Naive thymus-derived CD4-positive, alpha-beta T cell (primary cell): ENCODE measurements at regions of chr10 and their contacts with region 1.

Region 1: GRCh38 chr10:13787015-13787421 is 200.3 kb downstream of the PRPF18 start:
- DNase-seq: peak; percentile 37 to 94 (median 91)
- ATAC-seq: peak; percentile 94
- H3K4me3 ChIP-seq: peak overlapping the region; percentile 17
- H3K4me3 Mint-ChIP-seq: peak overlapping the region in 9 of 10 donors; percentile 76 to 88 (median 84)
- H3K27ac ChIP-seq: peak overlapping the region; percentile 93
- H3K27ac Mint-ChIP-seq: no peak overlapping the region
- H3K4me1 ChIP-seq: peaks cover 29 to 50% of the 10 kb centered on the region in 2 donors
- H3K4me1 Mint-ChIP-seq: peaks cover 11 to 37% (median 20%) of the 10 kb centered on the region in 7 donors
- H3K27me3 ChIP-seq: no peaks in the 10 kb centered on the region
- H3K27me3 Mint-ChIP-seq: no peaks in the 10 kb centered on the region

Region 2: DNA sequence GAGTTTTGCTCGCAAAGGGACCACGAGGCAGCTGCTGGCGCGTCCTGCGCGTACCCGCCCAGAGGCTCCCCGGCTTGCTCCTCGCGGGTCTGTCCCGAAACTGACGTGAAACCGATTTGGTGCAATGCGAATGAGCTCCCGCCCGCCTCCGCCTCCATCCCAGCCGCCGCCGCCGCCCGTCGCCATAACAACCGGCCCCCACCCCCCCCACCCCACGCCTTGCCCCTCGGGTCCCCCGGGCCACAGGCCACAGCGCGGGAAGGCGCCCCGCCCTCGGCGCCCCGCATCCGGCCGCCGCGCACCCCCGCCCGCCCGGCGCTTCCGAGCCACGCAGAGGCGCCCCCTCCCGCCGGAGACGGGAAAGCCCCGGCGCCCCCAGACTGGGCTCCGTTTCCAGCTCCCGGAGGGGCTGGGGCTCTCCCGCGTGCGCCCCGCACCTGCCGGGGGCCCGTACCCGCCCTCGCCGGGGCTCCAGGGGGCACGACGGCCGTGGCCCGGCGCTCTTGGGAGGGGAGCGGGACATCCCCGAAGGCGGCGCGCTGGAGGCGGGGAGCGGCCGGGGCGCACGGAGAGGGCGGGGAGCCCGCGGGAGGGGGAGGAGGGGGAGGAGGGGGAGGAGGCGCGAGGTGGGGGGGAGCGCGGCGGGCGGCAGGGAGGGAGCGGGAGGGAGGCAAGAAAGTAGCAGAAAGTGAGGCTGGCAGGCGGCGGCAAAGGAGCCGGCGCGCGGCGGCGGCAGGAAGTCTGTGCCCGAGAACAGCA is 1438.0 kb before region 1 on chr10 and contains the start of gene CAMK1D:
- CTCF ChIA-PET with region 1: no interaction called
- POLR2A ChIA-PET with region 1: no interaction called
- intact Hi-C with region 1: loop called (anchors 5 kb)
- DNase-seq: peak; percentile 83 to 92 (median 90)
- ATAC-seq: peak; percentile 84
- H3K4me3 ChIP-seq: peak within 1 kb of the TSS; percentile 83
- H3K4me3 Mint-ChIP-seq: peak within 1 kb of the TSS; percentile 78 to 99 (median 97)
- H3K27ac ChIP-seq: peak within 1 kb of the TSS; percentile 89
- H3K27ac Mint-ChIP-seq: peak within 1 kb of the TSS; percentile 86 to 99 (median 97)
- H3K4me1 ChIP-seq: peaks cover 18 to 19% of the 10 kb centered on the region in 2 donors
- H3K4me1 Mint-ChIP-seq: peaks cover 23 to 51% (median 42%) of the 10 kb centered on the region in 7 donors
- H3K27me3 ChIP-seq: no peaks in the 10 kb centered on the region
- H3K27me3 Mint-ChIP-seq: peaks cover 0 to 64% (median 0%) of the 10 kb centered on the region in 5 donors
- total RNA-seq, gene CAMK1D: 12.5 to 43.2 (median 18.7) TPM

Region 3: DNA sequence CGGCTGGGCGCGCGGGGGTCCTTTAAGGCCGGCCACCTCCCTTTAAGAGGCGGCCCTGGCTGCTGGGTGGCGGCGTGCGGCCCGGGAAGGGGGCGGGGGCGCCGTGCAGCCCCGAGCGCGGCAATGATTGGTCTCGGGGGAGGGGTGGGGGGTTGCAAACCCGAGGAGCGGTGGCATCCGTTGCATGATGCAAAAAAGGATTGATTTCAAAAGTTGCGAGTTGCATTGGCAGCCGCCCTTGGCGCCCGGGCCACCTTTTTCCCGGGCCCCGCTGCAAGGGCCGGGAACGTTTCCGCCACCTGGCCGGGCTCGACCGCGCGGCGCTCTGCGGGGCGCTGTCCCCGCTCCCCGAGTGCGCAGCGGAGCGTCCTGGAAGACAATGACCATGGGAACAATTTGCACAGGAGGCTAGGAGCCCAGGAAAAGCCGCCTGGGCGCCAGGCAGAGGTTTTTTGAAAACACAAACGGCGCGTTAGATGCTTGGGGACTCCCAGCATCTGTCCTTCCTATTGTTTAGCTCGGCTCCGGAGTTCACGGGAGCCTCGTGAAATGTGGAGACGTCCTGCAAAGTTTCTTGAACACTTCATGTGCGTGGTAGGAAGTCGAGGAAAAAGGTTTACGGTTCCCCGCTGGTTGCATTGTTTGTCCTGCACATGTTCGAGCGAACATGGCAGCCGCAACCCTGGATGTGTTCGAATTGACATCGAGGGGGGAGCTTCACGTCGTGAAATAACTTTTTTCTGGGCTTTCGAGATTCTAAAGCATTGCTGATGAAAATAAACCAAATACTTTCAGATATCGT is 438.6 kb before region 1 on chr10 and contains the start of gene SEPHS1:
- CTCF ChIA-PET with region 1: no interaction called
- POLR2A ChIA-PET with region 1: no interaction called
- intact Hi-C with region 1: loop called in 1 of 2 experiments (anchors 1 kb)
- DNase-seq: peak; percentile 62 to 87 (median 84)
- ATAC-seq: peak; percentile 83
- H3K4me3 ChIP-seq: peak within 1 kb of the TSS; percentile 95
- H3K4me3 Mint-ChIP-seq: peak within 1 kb of the TSS; percentile 92 to 99 (median 96)
- H3K27ac ChIP-seq: peak within 1 kb of the TSS; percentile 84
- H3K27ac Mint-ChIP-seq: peak within 1 kb of the TSS; percentile 90 to 98 (median 97)
- H3K4me1 ChIP-seq: peaks cover 18 to 36% of the 10 kb centered on the region in 2 donors
- H3K4me1 Mint-ChIP-seq: peaks cover 28 to 69% (median 62%) of the 10 kb centered on the region in 7 donors
- H3K27me3 ChIP-seq: no peaks in the 10 kb centered on the region
- H3K27me3 Mint-ChIP-seq: peaks cover 0 to 9% (median 0%) of the 10 kb centered on the region in 5 donors
- total RNA-seq, gene SEPHS1: 23.7 to 57.3 (median 36.5) TPM

Region 4: DNA sequence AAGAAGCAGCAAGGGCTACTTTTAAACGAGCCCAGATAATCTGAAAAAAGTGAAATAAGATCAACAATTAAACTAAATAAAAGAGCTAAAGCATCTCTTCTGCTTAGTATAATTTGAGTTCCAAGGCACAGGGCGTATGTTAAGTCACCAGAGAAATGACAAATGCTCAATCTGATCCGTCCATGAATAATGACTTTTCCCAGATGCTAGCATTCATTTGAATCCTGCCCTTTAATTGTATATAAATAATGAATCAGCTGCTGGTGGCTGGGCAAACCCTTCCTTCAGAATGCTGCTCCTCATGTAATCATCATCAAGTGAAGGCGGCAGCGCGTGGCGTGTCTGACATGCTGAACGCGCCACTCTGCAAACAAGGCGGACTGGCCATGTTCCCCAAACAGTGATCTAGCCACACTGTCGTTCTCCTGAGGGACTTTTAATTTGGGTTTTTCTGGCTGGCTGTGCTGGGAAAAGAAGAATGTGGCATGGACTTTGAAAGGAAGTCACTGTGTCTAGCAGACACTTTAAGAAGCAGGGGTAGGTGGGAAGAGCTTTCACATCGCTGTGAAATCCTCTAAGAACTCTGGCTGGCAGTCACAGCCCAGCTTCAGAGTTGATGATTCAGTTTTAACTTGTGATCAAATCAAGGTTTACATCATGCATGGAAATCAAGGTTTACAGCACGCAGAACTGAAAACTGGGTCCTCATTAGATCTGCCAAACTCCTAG is 328.9 kb before region 1 on chr10:
- CTCF ChIA-PET with region 1: no interaction called
- POLR2A ChIA-PET with region 1: no interaction called
- intact Hi-C with region 1: no loop called
- DNase-seq: no peak
- ATAC-seq: no peak
- H3K4me3 ChIP-seq: no peak overlapping the region
- H3K4me3 Mint-ChIP-seq: no peak overlapping the region
- H3K27ac ChIP-seq: no peak overlapping the region
- H3K27ac Mint-ChIP-seq: no peak overlapping the region
- H3K4me1 ChIP-seq: peaks cover 0 to 3% of the 10 kb centered on the region in 2 donors
- H3K4me1 Mint-ChIP-seq: peaks cover 0 to 9% (median 7%) of the 10 kb centered on the region in 7 donors
- H3K27me3 ChIP-seq: no peaks in the 10 kb centered on the region
- H3K27me3 Mint-ChIP-seq: peaks cover 9 to 34% (median 26%) of the 10 kb centered on the region in 5 donors

Region 5: DNA sequence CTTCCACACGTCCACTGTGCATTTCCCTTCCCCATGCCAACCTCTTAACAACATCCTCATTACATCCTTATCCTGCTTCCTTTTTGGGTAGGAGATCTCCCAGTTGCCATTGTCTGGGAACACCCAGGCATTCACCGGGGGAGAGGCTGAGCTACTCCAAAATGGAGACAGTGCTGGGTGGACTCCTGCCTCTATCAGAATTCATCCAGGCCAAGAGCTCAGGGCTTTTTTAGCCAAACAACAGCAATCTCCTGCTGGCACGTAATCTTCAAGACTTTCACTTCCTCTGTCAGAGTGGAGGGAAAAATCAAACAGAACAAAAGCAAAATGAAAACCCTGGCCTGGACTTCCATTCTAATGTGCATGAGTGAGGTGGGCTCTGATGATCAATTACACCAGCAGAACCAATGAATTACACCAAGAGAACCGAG is 44.7 kb after region 1 on chr10:
- CTCF ChIA-PET with region 1: no interaction called
- POLR2A ChIA-PET with region 1: no interaction called
- intact Hi-C with region 1: no loop called
- DNase-seq: no peak
- ATAC-seq: no peak
- H3K4me3 ChIP-seq: no peak overlapping the region
- H3K4me3 Mint-ChIP-seq: peak overlapping the region in 1 of 10 donors; percentile 10
- H3K27ac ChIP-seq: no peak overlapping the region
- H3K27ac Mint-ChIP-seq: peak overlapping the region in 6 of 9 donors; percentile 30 to 72 (median 42)
- H3K4me1 ChIP-seq: no peaks in the 10 kb centered on the region
- H3K4me1 Mint-ChIP-seq: peaks cover 7 to 11% (median 10%) of the 10 kb centered on the region in 7 donors
- H3K27me3 ChIP-seq: no peaks in the 10 kb centered on the region
- H3K27me3 Mint-ChIP-seq: peaks cover 0 to 5% (median 0%) of the 10 kb centered on the region in 5 donors

Region 6: DNA sequence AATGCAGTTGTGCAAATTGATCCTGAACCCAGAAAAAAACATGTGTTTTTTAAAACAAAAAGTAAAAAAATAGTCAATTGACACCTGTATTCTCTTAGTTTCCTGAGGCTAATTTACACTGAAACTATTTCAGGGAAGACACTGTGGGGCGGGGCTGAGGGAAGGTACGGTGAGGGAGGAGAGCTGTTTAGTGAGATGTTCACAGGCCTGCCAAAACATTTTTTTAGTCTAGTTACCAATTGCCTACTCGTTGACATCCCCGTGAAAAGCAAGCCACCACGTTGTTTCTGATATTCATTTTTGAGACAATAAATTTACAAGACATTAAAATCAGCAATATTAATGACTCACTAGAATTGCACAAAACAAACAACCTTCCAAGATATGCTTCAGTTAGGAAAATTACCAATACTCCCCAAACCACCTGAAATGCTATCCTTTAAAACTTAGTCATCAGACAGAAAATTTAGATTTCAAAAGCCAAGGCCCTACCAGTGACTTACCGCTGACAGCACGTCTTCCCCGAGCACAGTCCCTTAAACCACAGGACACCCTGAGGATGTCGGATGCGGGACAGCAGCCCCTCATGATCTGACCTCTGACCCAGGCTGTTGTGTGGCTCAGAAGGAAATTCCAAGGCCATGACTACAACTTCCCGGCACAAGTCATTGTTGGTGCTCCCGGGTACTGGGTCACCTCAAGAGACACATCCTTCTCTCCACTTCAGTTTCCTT is 78.9 kb after region 1 on chr10:
- CTCF ChIA-PET with region 1: no interaction called
- POLR2A ChIA-PET with region 1: no interaction called
- intact Hi-C with region 1: loop called in 1 of 2 experiments (anchors 2 kb)
- DNase-seq: no peak
- ATAC-seq: no peak
- H3K4me3 ChIP-seq: no peak overlapping the region
- H3K4me3 Mint-ChIP-seq: no peak overlapping the region
- H3K27ac ChIP-seq: no peak overlapping the region
- H3K27ac Mint-ChIP-seq: peak overlapping the region in 2 of 9 donors; percentile 26 to 56
- H3K4me1 ChIP-seq: peaks cover 0 to 32% of the 10 kb centered on the region in 2 donors
- H3K4me1 Mint-ChIP-seq: peaks cover 0 to 72% (median 47%) of the 10 kb centered on the region in 7 donors
- H3K27me3 ChIP-seq: no peaks in the 10 kb centered on the region
- H3K27me3 Mint-ChIP-seq: peaks cover 0 to 3% (median 0%) of the 10 kb centered on the region in 5 donors

Region 7: GRCh38 chr10:13930120-13930519 is 143.1 kb after region 1 on chr10:
- CTCF ChIA-PET with region 1: no interaction called
- POLR2A ChIA-PET with region 1: no interaction called
- intact Hi-C with region 1: no loop called
- DNase-seq: peak in 8 of 9 donors; percentile 22 to 71 (median 60)
- ATAC-seq: peak; percentile 94
- H3K4me3 ChIP-seq: no peak overlapping the region
- H3K4me3 Mint-ChIP-seq: peak overlapping the region; percentile 3 to 69 (median 40)
- H3K27ac ChIP-seq: no peak overlapping the region
- H3K27ac Mint-ChIP-seq: peak overlapping the region in 3 of 9 donors; percentile 16 to 79 (median 33)
- H3K4me1 ChIP-seq: no peaks in the 10 kb centered on the region
- H3K4me1 Mint-ChIP-seq: peaks cover 7 to 39% (median 19%) of the 10 kb centered on the region in 7 donors
- H3K27me3 ChIP-seq: no peaks in the 10 kb centered on the region
- H3K27me3 Mint-ChIP-seq: peaks cover 0 to 33% (median 5%) of the 10 kb centered on the region in 5 donors

Region 8: GRCh38 chr10:14024329-14025202 is 237.5 kb after region 1 on chr10:
- CTCF ChIA-PET with region 1: no interaction called
- POLR2A ChIA-PET with region 1: no interaction called
- intact Hi-C with region 1: no loop called
- DNase-seq: no peak
- ATAC-seq: peak; percentile 26
- H3K4me3 ChIP-seq: no peak overlapping the region
- H3K4me3 Mint-ChIP-seq: peak overlapping the region in 8 of 10 donors; percentile 6 to 57 (median 30)
- H3K27ac ChIP-seq: no peak overlapping the region
- H3K27ac Mint-ChIP-seq: no peak overlapping the region
- H3K4me1 ChIP-seq: peaks cover 0 to 8% of the 10 kb centered on the region in 2 donors
- H3K4me1 Mint-ChIP-seq: peaks cover 5 to 30% (median 26%) of the 10 kb centered on the region in 7 donors
- H3K27me3 ChIP-seq: no peaks in the 10 kb centered on the region
- H3K27me3 Mint-ChIP-seq: peaks cover 0 to 44% (median 0%) of the 10 kb centered on the region in 5 donors

Region 9: GRCh38 chr10:14185316-14186045 is 398.5 kb after region 1 on chr10:
- CTCF ChIA-PET with region 1: interaction called, 4 read pairs
- POLR2A ChIA-PET with region 1: interaction called, 6 read pairs
- intact Hi-C with region 1: loop called (anchors 1 to 2 kb)
- DNase-seq: peak in 4 of 9 donors; percentile 30 to 75 (median 74)
- ATAC-seq: peak; percentile 87
- H3K4me3 ChIP-seq: peak overlapping the region; percentile 37
- H3K4me3 Mint-ChIP-seq: peak overlapping the region; percentile 18 to 88 (median 77)
- H3K27ac ChIP-seq: peak overlapping the region; percentile 61
- H3K27ac Mint-ChIP-seq: peak overlapping the region; percentile 88 to 98 (median 95)
- H3K4me1 ChIP-seq: peaks cover 0 to 12% of the 10 kb centered on the region in 2 donors
- H3K4me1 Mint-ChIP-seq: peaks cover 12 to 35% (median 22%) of the 10 kb centered on the region in 7 donors
- H3K27me3 ChIP-seq: peaks cover 0 to 5% of the 10 kb centered on the region in 2 donors
- H3K27me3 Mint-ChIP-seq: peaks cover 17 to 69% (median 21%) of the 10 kb centered on the region in 5 donors

Region 10: GRCh38 chr10:14648005-14648765 is 861.2 kb after region 1 on chr10:
- CTCF ChIA-PET with region 1: no interaction called
- POLR2A ChIA-PET with region 1: no interaction called
- intact Hi-C with region 1: loop called (anchors 1 kb)
- DNase-seq: peak; percentile 55 to 93 (median 86)
- ATAC-seq: peak; percentile 91
- H3K4me3 ChIP-seq: peak overlapping the region; percentile 54
- H3K4me3 Mint-ChIP-seq: peak overlapping the region; percentile 77 to 98 (median 88)
- H3K27ac ChIP-seq: peak overlapping the region; percentile 98
- H3K27ac Mint-ChIP-seq: peak overlapping the region; percentile 95 to 100 (median 99)
- H3K4me1 ChIP-seq: peaks cover 25 to 31% of the 10 kb centered on the region in 2 donors
- H3K4me1 Mint-ChIP-seq: peaks cover 20 to 70% (median 61%) of the 10 kb centered on the region in 7 donors
- H3K27me3 ChIP-seq: no peaks in the 10 kb centered on the region
- H3K27me3 Mint-ChIP-seq: no peaks in the 10 kb centered on the region

Region 11: GRCh38 chr10:14959276-14960057 is 1172.4 kb after region 1 on chr10 and contains the start of gene MEIG1:
- CTCF ChIA-PET with region 1: no interaction called
- POLR2A ChIA-PET with region 1: no interaction called
- intact Hi-C with region 1: loop called in 1 of 2 experiments (anchors 1 kb)
- DNase-seq: peak; percentile 82 to 99 (median 90)
- ATAC-seq: peak; percentile 93
- H3K4me3 ChIP-seq: peak within 1 kb of the TSS; percentile 97
- H3K4me3 Mint-ChIP-seq: peak within 1 kb of the TSS; percentile 91 to 99 (median 96)
- H3K27ac ChIP-seq: peak within 1 kb of the TSS; percentile 81
- H3K27ac Mint-ChIP-seq: peak within 1 kb of the TSS; percentile 93 to 98 (median 96)
- H3K4me1 ChIP-seq: peaks cover 8 to 10% of the 10 kb centered on the region in 2 donors
- H3K4me1 Mint-ChIP-seq: peaks cover 6 to 42% (median 34%) of the 10 kb centered on the region in 7 donors
- H3K27me3 ChIP-seq: no peaks in the 10 kb centered on the region
- H3K27me3 Mint-ChIP-seq: no peaks in the 10 kb centered on the region
- total RNA-seq, gene MEIG1: 1.2 to 1.9 TPM in 2 of 5 experiments, not detected in the others